ENCODE measurements at regions of chr2 and their contacts with region 1.

Region 1: GRCh38 chr2:216666461-216667233 is 28.7 kb downstream of the IGFBP5 start:
- DNase-seq: peak; percentile 79
- ATAC-seq: peak; percentile 75

Region 2: DNA sequence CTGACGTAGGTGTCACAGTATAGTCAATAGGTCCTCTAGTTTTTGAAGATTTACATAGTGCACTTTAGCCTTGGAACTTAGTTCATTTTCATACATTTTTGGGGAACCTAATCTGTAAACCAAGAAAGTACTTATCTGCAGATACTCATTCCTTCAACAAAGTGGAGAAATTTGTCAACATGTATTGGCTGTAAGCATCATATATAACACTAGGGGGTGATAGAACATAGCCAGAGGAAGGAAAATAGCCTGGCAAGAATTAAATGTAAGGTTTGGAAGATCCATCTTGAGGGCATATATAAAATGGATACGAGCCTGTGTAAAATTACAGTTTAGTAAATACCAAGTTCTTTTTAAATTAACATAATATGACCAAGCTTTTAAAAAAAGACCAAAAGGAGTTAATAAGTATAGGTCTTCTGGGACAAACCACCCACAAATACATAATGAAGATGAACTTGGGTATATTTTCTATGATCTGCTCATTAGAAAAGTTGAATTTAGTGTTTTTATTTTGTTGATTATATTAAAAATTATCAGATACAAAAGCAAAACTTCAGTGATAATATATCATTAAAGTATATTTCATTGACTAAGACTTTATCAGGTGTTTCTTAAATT is 149.8 kb before region 1 on chr2:
- intact Hi-C with region 1: loop called (anchors 2 kb)
- DNase-seq: no peak
- ATAC-seq: peak; percentile 32

Region 3: GRCh38 chr2:216525972-216526371 is 140.7 kb before region 1 on chr2:
- intact Hi-C with region 1: loop called (anchors 5 kb)
- DNase-seq: no peak
- ATAC-seq: peak; percentile 76

Region 4: GRCh38 chr2:216789081-216789480 is 122.4 kb after region 1 on chr2:
- intact Hi-C with region 1: no loop called
- DNase-seq: no peak
- ATAC-seq: no peak

Measured in left ventricle myocardium superior (tissue), 1 donor.